Sigmoid colon (tissue), 7 donors: ENCODE measurements at regions of chr4 and their contacts with region 1.

Region 1: DNA sequence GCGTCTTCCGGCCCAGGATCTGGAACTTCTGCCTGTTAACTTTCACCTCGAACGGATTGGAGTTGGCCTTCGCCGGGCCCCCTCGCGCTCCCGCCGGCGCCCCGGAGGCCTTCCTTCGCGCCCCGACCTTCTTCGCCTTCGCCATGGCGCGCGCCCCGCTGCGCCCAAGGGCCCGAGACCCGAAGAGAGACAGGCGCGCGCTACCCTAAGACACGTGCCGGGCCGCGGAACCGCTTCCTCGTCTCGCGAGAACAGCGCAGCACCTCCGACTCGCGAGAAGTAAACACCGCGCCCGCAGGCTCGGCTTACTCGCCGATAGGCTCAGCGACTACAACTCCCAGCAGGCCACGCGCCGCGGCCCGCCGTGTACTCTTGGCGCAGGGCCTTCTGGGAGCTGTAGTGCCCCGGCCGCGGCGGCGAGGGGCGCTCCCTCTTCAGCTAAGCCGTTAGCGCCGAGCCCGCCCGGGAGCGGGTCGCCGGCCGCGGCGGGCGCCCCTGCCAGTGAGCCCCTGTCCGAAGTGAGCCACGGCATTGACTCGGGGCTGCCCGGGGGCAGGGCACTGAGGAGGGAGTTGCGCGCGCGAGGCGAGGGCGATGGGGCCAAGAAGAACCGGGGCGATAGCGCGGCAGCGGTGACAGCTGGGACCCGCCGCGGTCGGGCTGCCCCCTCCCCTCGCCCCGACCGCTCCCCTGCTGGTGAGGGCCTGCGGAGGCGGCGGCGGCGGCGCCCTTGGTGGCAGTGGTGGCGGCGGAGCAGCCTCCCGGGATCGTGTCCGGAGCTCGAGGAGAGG is at the starts of genes GRK4 and NOP14:
- DNase-seq: peak; percentile 99
- H3K4me3 ChIP-seq: peak within 1 kb of the TSS; percentile 85 to 98 (median 90)
- H3K27ac ChIP-seq: peak within 1 kb of the TSS; percentile 83 to 92 (median 86)
- H3K4me1 ChIP-seq: peaks cover 0 to 29% (median 24%) of the 10 kb centered on the region in 4 donors
- H3K27me3 ChIP-seq: no peaks in the 10 kb centered on the region
- CTCF ChIP-seq: peak in 1 of 4 experiments; percentile 26
- EP300 ChIP-seq: peak in 1 of 4 donors; percentile 41
- POLR2A ChIP-seq: peak in 1 of 2 donors; percentile 18
- total RNA-seq, gene GRK4: 3.9 to 10.2 (median 6.7) TPM
- total RNA-seq, gene NOP14: 12.5 to 19.1 (median 15.1) TPM

Region 2: DNA sequence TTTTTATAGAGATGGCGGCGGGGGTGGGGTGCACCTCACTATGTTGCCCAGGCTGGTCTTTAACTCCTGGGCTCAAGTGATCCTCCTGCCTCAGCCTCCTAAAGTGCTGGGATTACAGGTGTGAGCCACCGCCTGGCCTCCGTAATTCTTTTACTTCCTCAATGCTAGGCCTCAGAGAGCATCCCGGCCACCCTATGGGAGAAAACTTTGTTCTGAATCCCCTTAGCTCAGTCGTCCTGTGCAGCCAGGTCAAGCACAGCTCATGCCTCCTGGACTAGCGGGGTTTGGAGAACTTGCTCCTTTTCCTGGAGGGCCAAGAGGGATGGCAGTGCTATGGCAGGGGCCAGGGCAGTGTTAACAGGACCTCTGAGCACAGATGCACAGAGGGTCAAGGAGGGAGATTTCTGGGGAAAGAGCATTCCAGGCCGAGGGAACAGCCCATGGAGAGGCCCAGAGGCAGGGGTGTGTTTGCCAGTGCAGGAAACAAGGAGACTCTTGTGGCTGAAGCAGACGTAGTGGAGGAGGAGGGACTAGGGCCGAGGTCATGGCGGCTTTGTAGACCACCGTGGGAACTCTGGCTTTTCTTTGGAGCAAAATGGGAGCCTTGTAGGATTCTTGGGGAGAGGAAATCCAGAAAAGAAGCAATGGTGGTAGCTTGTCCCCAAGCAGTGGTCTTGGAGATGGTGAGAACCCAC is 197.4 kb before region 1 on chr4:
- intact Hi-C with region 1: loop called (anchors 2 kb)
- DNase-seq: peak; percentile 40
- H3K4me3 ChIP-seq: no peak overlapping the region
- H3K27ac ChIP-seq: no peak overlapping the region
- H3K4me1 ChIP-seq: peaks cover 0 to 13% (median 8%) of the 10 kb centered on the region in 4 donors
- H3K27me3 ChIP-seq: peaks cover 0 to 4% (median 0%) of the 10 kb centered on the region in 3 donors
- CTCF ChIP-seq: no peak
- EP300 ChIP-seq: no peak
- POLR2A ChIP-seq: no peak

Region 3: GRCh38 chr4:2843263-2843940 is 120.0 kb before region 1 on chr4 and contains the start of gene ADD1:
- intact Hi-C with region 1: loop called (anchors 10 kb)
- DNase-seq: peak; percentile 96
- H3K4me3 ChIP-seq: peak within 1 kb of the TSS; percentile 86 to 95 (median 90)
- H3K27ac ChIP-seq: peak within 1 kb of the TSS; percentile 93 to 99 (median 96)
- H3K4me1 ChIP-seq: peaks cover 0 to 52% (median 42%) of the 10 kb centered on the region in 4 donors
- H3K27me3 ChIP-seq: no peaks in the 10 kb centered on the region
- CTCF ChIP-seq: no peak
- EP300 ChIP-seq: peak in 1 of 4 donors; percentile 8
- POLR2A ChIP-seq: peak; percentile 81 to 90
- total RNA-seq, gene ADD1: 166 to 378 (median 183) TPM

Region 4: DNA sequence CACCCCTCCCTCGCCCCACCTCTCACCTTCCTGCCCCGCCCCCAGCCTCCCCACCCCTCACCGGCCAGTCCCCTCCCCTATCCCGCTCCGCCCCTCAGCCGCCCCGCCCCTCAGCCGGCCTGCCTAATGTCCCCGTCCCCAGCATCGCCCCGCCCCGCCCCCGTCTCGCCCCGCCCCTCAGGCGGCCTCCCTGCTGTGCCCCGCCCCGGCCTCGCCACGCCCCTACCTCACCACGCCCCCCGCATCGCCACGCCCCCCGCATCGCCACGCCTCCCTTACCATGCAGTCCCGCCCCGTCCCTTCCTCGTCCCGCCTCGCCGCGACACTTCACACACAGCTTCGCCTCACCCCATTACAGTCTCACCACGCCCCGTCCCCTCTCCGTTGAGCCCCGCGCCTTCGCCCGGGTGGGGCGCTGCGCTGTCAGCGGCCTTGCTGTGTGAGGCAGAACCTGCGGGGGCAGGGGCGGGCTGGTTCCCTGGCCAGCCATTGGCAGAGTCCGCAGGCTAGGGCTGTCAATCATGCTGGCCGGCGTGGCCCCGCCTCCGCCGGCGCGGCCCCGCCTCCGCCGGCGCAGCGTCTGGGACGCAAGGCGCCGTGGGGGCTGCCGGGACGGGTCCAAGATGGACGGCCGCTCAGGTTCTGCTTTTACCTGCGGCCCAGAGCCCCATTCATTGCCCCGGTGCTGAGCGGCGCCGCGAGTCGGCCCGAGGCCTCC is 110.9 kb after region 1 on chr4 and contains the starts of genes HTT and HTT-AS:
- intact Hi-C with region 1: loop called (anchors 10 kb)
- DNase-seq: peak; percentile 98
- H3K4me3 ChIP-seq: peak within 1 kb of the TSS; percentile 80 to 86 (median 82)
- H3K27ac ChIP-seq: peak within 1 kb of the TSS; percentile 86 to 91 (median 89)
- H3K4me1 ChIP-seq: peaks cover 0 to 31% (median 21%) of the 10 kb centered on the region in 4 donors
- H3K27me3 ChIP-seq: no peaks in the 10 kb centered on the region
- CTCF ChIP-seq: no peak
- EP300 ChIP-seq: no peak
- POLR2A ChIP-seq: peak; percentile 49 to 62
- total RNA-seq, gene HTT: 17.0 to 41.5 (median 26.5) TPM
- total RNA-seq, gene HTT-AS: not detected